H1 (cell line): ENCODE measurements at regions of chr12 and their contacts with region 1.

Region 1: GRCh38 chr12:47547085-47547484 is 158.7 kb downstream of the RPAP3 start:
- DNase-seq: no peak
- H3K4me3 ChIP-seq: no peak overlapping the region
- H3K27ac ChIP-seq: no peak overlapping the region
- H3K4me1 ChIP-seq: no peaks in the 10 kb centered on the region
- H3K27me3 ChIP-seq: no peaks in the 10 kb centered on the region
- CTCF ChIP-seq: peak in 2 of 3 experiments; percentile 38 to 44; a peak in 3 of 4 replicates
- EP300 ChIP-seq: no peak
- POLR2A ChIP-seq: no peak
- RAD21 ChIP-seq: peak; percentile 63 to 67

Region 2: GRCh38 chr12:47636908-47637780 is 90.1 kb after region 1 on chr12:
- CTCF ChIA-PET with region 1: interaction called, 17 read pairs
- POLR2A ChIA-PET with region 1: no interaction called
- DNase-seq: peak; percentile 53 to 86
- H3K4me3 ChIP-seq: no peak overlapping the region
- H3K27ac ChIP-seq: no peak overlapping the region
- H3K4me1 ChIP-seq: peaks cover 0 to 3% (median 1%) of the 10 kb centered on the region in 4 experiments; a peak in 3 of 7 replicates
- H3K27me3 ChIP-seq: no peaks in the 10 kb centered on the region; a peak in 1 of 7 replicates
- CTCF ChIP-seq: peak; percentile 42 to 75 (median 71)
- EP300 ChIP-seq: no peak
- POLR2A ChIP-seq: no peak
- RAD21 ChIP-seq: peak; percentile 49 to 57